Activated CD8-positive, alpha-beta T cell treated with anti-CD3 and anti-CD28 coated beads for 36 hours (primary cell): ENCODE measurements at regions of chr7 and their contacts with region 1.

Region 1: DNA sequence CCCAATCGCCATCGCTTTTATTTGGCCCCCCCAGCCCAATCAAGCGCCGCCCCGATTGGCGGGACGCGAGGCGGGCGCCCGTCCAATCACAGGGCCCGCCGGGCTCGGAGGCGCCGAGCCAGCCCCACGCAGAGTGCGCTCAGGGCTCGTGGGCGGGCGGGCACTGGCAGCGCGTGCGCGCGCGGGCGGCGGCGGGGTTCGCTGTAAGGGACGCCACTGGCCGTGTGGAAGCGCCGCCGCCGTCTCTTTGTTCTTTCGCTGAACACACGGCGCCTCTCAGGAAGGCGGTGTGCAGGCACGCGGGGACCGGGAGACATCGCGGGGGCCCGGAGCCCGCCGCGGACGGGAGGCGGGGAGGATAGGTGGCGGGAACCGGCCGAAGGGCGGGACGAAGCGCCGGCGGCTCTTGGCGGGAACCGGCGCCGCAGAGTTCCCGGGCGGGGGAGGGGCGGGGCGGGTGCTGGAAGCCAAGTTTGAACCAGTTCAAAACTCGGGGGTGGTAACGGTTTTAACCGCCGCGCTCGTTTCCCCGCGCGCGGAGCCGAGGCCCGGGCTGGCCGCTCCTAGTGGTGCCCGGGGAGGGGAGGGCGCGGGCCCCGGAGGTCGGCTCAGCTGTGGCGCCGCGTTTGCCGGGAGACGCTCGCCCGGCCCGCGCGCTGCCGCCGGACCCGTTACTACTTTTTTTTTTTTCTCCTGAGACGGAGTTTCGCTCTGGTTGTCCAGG is 370 bp upstream of the EZH2 start:
- DNase-seq: peak; percentile 94
- ATAC-seq: peak; percentile 93
- H3K4me3 Mint-ChIP-seq: peak overlapping the region; percentile 94
- H3K27ac Mint-ChIP-seq: peak overlapping the region; percentile 98
- H3K4me1 Mint-ChIP-seq: peaks cover 30% of the 10 kb centered on the region
- H3K27me3 Mint-ChIP-seq: no peaks in the 10 kb centered on the region
- CTCF ChIP-seq: no peak

Region 2: DNA sequence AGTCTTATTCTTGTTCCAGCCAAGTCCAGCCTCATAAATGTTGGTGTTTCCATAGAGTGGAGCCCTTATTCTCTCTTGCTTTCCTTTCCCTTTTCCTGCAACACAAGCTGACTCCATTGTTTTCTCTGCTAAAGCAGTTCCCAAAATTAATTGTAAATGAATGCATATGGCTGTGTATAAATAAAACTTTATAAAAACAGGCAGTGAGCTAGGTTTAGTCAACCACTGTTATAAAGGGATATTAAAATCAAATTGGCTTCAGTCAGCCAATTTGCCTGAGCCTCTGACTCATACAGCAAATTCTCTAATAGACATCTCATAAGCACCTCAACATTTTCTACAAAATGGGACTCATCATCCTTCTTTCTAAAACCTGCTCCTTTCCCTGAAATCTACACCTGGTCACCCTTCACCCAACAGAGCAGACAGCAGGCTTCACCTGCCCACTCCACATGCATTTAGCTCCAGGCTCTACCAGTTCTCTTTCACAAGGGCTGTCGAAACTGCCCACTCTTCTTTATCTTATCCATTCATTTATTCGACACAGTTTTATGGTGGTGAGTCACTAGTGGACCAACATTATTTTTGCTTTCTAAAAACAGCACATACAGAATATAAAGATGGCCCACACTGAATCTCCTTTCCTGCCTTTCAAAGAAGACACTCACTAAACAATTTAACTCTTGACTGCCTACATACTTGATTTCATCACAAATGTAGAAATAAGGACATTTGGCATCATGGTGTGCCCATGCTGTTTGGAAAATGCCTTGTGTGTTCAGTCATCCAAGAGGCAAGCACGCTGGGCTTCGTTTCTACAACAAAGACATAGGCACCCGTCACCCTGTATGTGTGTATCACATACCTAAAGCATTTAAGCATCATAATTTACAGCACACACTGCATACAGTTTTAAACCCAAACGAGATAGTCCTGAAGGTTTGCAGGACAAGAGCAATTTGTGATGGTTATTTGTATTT is 368.5 kb before region 1 on chr7:
- CTCF ChIA-PET with region 1: no interaction called
- POLR2A ChIA-PET with region 1: no interaction called
- intact Hi-C with region 1: no loop called
- DNase-seq: no peak
- ATAC-seq: no peak
- H3K4me3 Mint-ChIP-seq: no peak overlapping the region
- H3K27ac Mint-ChIP-seq: no peak overlapping the region
- H3K4me1 Mint-ChIP-seq: no peaks in the 10 kb centered on the region
- H3K27me3 Mint-ChIP-seq: peaks cover 10% of the 10 kb centered on the region
- CTCF ChIP-seq: no peak

Region 3: DNA sequence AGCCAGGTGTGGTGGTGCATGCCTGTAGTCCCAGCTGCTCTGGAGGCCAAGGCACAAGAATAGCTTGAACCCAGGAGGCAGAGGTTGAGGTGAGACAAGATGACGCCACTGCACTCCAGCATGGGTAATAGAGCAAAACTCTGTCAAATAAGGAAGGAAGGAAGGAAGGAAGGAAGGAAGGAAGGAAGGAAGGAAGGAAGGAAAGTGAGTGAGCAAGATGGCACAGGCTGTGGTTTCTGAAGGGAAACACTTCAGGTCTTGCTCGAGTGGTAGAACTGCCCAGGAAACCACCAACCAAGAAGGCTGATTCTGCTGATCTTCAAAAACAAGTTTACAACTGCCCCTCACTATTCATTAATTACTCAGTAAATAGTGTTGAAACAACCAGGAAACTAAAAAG is 45.6 kb before region 1 on chr7:
- CTCF ChIA-PET with region 1: no interaction called
- POLR2A ChIA-PET with region 1: no interaction called
- intact Hi-C with region 1: no loop called
- DNase-seq: no peak
- ATAC-seq: peak; percentile 24
- H3K4me3 Mint-ChIP-seq: no peak overlapping the region
- H3K27ac Mint-ChIP-seq: peak overlapping the region; percentile 34
- H3K4me1 Mint-ChIP-seq: peaks cover 32% of the 10 kb centered on the region
- H3K27me3 Mint-ChIP-seq: no peaks in the 10 kb centered on the region
- CTCF ChIP-seq: no peak

Region 4: DNA sequence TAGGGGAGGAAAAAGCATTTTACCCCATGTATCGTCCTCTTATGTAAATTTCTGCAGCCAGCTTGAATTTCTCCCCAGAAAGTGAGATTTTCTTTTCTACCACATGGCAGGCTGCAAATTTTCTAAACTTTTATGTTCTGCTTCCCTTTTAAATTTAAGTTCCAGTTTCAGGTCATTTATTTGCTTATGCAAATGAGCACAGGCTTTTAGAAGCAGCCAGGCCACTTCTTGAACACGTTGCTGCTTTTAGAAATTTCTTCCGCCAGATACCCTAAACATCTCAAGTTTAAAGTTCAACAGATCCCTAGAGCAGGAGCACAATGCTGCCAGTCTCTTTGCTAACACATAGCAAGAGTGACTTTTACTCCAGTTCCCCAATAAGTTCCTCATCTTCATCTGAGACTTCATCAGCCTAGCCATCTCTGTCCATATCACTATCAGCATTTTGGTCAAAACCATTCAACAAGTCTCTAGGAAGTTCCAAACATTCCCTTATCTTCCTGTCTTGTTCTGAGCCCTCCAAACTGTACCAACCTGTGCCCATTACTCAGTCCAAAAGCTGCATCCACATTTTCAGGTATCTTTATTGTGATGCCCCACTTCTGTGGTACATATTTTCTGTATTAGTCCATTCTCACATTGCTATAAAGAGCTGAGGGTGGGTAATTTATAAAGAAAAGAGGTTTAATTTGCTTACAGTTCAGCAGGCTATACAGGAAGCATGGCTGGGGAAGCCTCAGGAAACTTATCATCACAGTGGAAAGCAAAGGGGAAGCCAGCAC is 16.7 kb before region 1 on chr7:
- CTCF ChIA-PET with region 1: no interaction called
- POLR2A ChIA-PET with region 1: interaction called, 13 read pairs
- intact Hi-C with region 1: no loop called
- DNase-seq: no peak
- ATAC-seq: no peak
- H3K4me3 Mint-ChIP-seq: no peak overlapping the region
- H3K27ac Mint-ChIP-seq: no peak overlapping the region
- H3K4me1 Mint-ChIP-seq: peaks cover 58% of the 10 kb centered on the region
- H3K27me3 Mint-ChIP-seq: no peaks in the 10 kb centered on the region
- CTCF ChIP-seq: no peak

Region 5: DNA sequence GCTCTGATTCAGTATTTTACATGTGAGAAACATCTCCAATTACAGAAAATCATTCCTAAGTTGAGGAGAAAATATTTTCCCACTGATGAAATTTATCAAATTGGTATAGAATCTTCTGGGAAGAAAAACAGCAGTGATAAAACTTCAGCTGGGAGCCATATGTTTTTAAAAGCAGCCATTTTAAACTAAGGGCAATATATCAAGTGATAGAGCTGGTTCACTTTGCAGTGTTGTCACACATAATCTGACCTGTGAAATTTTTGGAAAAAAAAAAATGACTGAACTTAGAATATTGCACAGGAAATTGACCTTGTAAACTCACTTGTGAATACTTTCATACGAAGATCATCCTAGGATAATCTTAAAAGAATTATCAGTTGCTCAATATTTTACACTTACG is 10.1 kb after region 1 on chr7:
- CTCF ChIA-PET with region 1: no interaction called
- POLR2A ChIA-PET with region 1: interaction called, 14 read pairs
- intact Hi-C with region 1: no loop called
- DNase-seq: no peak
- ATAC-seq: no peak
- H3K4me3 Mint-ChIP-seq: no peak overlapping the region
- H3K27ac Mint-ChIP-seq: no peak overlapping the region
- H3K4me1 Mint-ChIP-seq: peaks cover 15% of the 10 kb centered on the region
- H3K27me3 Mint-ChIP-seq: no peaks in the 10 kb centered on the region
- CTCF ChIP-seq: no peak

Region 6: GRCh38 chr7:148975896-148976295 is 91.4 kb after region 1 on chr7:
- CTCF ChIA-PET with region 1: no interaction called
- POLR2A ChIA-PET with region 1: no interaction called
- intact Hi-C with region 1: no loop called
- DNase-seq: no peak
- ATAC-seq: no peak
- H3K4me3 Mint-ChIP-seq: no peak overlapping the region
- H3K27ac Mint-ChIP-seq: no peak overlapping the region
- H3K4me1 Mint-ChIP-seq: peaks cover 10% of the 10 kb centered on the region
- H3K27me3 Mint-ChIP-seq: no peaks in the 10 kb centered on the region
- CTCF ChIP-seq: no peak